Caco-2 (cell line): ENCODE measurements at regions of chr1 and their contacts with region 1.

Region 1: GRCh38 chr1:163528710-163529348 is 207.1 kb downstream of the NUF2 start:
- DNase-seq: peak in 1 of 2 experiments; percentile 42
- H3K4me3 ChIP-seq: no peak overlapping the region
- H3K4me3 Mint-ChIP-seq: no peak overlapping the region
- H3K27ac Mint-ChIP-seq: no peak overlapping the region
- H3K4me1 ChIP-seq: no peaks in the 10 kb centered on the region
- H3K4me1 Mint-ChIP-seq: no peaks in the 10 kb centered on the region
- H3K27me3 ChIP-seq: no peaks in the 10 kb centered on the region
- H3K27me3 Mint-ChIP-seq: peaks cover 2% of the 10 kb centered on the region
- CTCF ChIP-seq: peak; percentile 64 to 73

Region 2: GRCh38 chr1:163307479-163308171 is 221.2 kb before region 1 on chr1:
- CTCF ChIA-PET with region 1: no interaction called
- POLR2A ChIA-PET with region 1: no interaction called
- intact Hi-C with region 1: no loop called
- DNase-seq: no peak
- H3K4me3 ChIP-seq: no peak overlapping the region
- H3K4me3 Mint-ChIP-seq: no peak overlapping the region
- H3K27ac Mint-ChIP-seq: no peak overlapping the region
- H3K4me1 ChIP-seq: no peaks in the 10 kb centered on the region
- H3K4me1 Mint-ChIP-seq: no peaks in the 10 kb centered on the region
- H3K27me3 ChIP-seq: no peaks in the 10 kb centered on the region
- H3K27me3 Mint-ChIP-seq: no peaks in the 10 kb centered on the region
- CTCF ChIP-seq: no peak

Region 3: GRCh38 chr1:163361123-163361934 is 167.5 kb before region 1 on chr1:
- CTCF ChIA-PET with region 1: interaction called, 3 read pairs
- POLR2A ChIA-PET with region 1: no interaction called
- intact Hi-C with region 1: loop called (anchors 1 kb)
- DNase-seq: peak in 1 of 2 experiments; percentile 39
- H3K4me3 ChIP-seq: no peak overlapping the region
- H3K4me3 Mint-ChIP-seq: no peak overlapping the region
- H3K27ac Mint-ChIP-seq: no peak overlapping the region
- H3K4me1 ChIP-seq: no peaks in the 10 kb centered on the region
- H3K4me1 Mint-ChIP-seq: peaks cover 6% of the 10 kb centered on the region
- H3K27me3 ChIP-seq: no peaks in the 10 kb centered on the region
- H3K27me3 Mint-ChIP-seq: peaks cover 2% of the 10 kb centered on the region
- CTCF ChIP-seq: peak; percentile 23 to 49

Region 4: DNA sequence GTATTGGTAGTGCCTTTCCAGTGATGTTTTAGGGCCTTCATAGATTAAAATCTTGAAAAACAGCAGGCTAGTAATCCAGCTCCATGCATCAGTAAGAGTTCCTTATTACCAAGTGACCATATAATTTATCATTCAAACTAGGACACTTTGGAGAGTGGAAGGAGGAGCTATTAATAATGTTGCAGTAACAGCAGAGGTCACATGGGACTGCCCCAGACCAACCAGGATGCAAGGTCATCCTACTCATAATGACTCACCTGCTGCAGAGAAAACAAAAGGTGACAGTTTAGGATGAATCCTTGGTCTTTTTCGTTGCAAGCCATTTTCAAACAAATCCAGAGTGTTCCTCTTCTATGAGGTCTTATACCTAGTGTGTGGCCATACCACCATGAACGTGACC is 19.7 kb before region 1 on chr1:
- CTCF ChIA-PET with region 1: no interaction called
- POLR2A ChIA-PET with region 1: no interaction called
- intact Hi-C with region 1: no loop called
- DNase-seq: no peak
- H3K4me3 ChIP-seq: no peak overlapping the region
- H3K4me3 Mint-ChIP-seq: no peak overlapping the region
- H3K27ac Mint-ChIP-seq: no peak overlapping the region
- H3K4me1 ChIP-seq: no peaks in the 10 kb centered on the region
- H3K4me1 Mint-ChIP-seq: no peaks in the 10 kb centered on the region
- H3K27me3 ChIP-seq: no peaks in the 10 kb centered on the region
- H3K27me3 Mint-ChIP-seq: peaks cover 3% of the 10 kb centered on the region
- CTCF ChIP-seq: no peak

Region 5: DNA sequence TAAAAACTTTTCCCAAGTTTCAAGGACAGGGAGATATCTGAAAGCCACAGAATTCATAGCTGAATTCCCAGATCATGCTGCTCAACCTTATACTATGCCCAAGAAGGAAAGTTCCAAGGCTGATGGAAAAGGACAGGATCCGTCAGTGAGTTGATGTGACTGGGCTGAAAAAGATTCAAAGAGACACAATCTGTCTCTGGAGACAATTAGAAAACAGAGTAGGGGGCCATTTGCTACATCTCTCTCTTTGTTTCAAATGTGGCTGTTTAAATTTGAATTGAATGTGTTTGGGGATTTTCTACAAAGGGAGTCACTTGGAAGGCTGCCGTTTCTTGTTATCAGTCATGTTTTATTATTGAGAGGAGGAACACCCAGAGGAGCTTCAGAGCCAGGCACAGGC is 85.5 kb after region 1 on chr1:
- CTCF ChIA-PET with region 1: no interaction called
- POLR2A ChIA-PET with region 1: no interaction called
- intact Hi-C with region 1: no loop called
- DNase-seq: no peak
- H3K4me3 ChIP-seq: no peak overlapping the region
- H3K4me3 Mint-ChIP-seq: no peak overlapping the region
- H3K27ac Mint-ChIP-seq: no peak overlapping the region
- H3K4me1 ChIP-seq: no peaks in the 10 kb centered on the region
- H3K4me1 Mint-ChIP-seq: no peaks in the 10 kb centered on the region
- H3K27me3 ChIP-seq: no peaks in the 10 kb centered on the region
- H3K27me3 Mint-ChIP-seq: peaks cover 7% of the 10 kb centered on the region
- CTCF ChIP-seq: no peak